ENCODE measurements at regions of chr2 and their contacts with region 1.

Region 1: DNA sequence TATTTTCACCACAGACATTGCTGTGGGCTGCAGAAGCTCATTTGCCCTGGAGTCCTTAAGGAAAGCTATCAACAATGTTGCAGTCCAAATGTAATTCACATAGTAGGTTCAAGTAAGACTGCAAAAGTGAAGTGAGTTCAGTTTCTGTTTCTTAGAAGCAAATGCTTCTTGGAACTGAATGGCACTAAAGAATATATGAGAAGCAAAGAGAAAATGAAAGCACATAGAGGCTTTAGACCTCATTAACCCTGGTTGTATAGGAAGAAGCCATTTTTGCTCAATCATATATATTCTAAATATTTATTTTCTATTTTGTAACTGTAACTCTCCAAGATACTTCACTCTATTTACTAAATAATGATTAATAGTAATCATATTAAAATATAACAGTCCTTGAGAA is 292.0 kb downstream of the ZNF804A start:
- DNase-seq: no peak
- ATAC-seq: no peak
- H3K4me3 Mint-ChIP-seq: no peak overlapping the region
- H3K27ac Mint-ChIP-seq: no peak overlapping the region
- H3K4me1 Mint-ChIP-seq: no peaks in the 10 kb centered on the region
- H3K27me3 Mint-ChIP-seq: no peaks in the 10 kb centered on the region
- CTCF ChIP-seq: no peak

Region 2: DNA sequence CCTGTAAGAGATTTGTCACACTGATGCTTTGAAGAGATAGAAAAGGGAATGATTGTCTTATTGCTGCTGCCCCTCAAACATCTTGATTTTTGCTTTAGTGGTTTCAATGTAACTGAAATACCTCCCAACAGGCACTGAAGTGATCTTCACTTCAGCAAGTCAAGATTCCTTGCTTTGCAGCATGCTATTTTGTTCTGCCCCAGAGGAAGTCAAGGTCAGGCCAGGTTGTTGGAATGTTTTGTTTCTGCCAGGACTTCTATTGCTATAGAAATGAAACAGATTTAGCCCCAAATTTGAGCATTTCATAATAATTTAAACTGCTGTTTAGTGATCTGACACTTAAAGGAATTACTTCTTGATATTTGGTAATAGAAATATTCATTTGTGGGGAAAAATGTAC is 14.4 kb before region 1 on chr2:
- CTCF ChIA-PET with region 1: no interaction called
- POLR2A ChIA-PET with region 1: no interaction called
- intact Hi-C with region 1: loop called (anchors 2 kb)
- DNase-seq: no peak
- ATAC-seq: no peak
- H3K4me3 Mint-ChIP-seq: no peak overlapping the region
- H3K27ac Mint-ChIP-seq: no peak overlapping the region
- H3K4me1 Mint-ChIP-seq: no peaks in the 10 kb centered on the region
- H3K27me3 Mint-ChIP-seq: no peaks in the 10 kb centered on the region
- CTCF ChIP-seq: no peak

Measured in activated B cell treated with CpG ODN at 0.5 μM for 24 hours (primary cell).